ENCODE measurements at regions of chr14 and their contacts with region 1.

Region 1: GRCh38 chr14:91286530-91286937 is 42.0 kb upstream of the GPR68 start:
- DNase-seq: no peak
- H3K4me3 ChIP-seq: no peak overlapping the region
- H3K27me3 ChIP-seq: no peaks in the 10 kb centered on the region
- CTCF ChIP-seq: peak; percentile 85

Region 2: DNA sequence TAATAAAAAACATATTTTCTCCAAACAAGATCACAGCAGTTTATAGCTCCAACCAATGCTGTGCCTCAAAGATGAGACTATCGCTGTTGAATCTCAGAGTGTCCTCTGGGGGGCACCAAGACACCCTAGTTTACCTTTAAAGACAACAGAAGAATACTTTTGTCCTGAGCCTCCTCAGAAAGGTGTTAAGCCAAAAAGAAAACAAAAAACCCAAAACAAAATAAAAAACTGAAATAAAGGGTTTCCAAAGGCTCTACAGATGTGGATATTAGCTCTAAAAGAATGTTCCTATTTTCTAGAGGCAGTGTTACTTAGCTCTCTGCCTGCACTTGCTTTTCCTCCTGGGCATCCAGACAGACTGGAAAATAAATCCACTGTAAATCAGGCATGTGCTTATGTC is 383.4 kb before region 1 on chr14:
- CTCF ChIA-PET with region 1: interaction called, 33 read pairs
- POLR2A ChIA-PET with region 1: no interaction called
- DNase-seq: no peak
- H3K4me3 ChIP-seq: no peak overlapping the region
- H3K27me3 ChIP-seq: no peaks in the 10 kb centered on the region
- CTCF ChIP-seq: peak; percentile 71

Region 3: DNA sequence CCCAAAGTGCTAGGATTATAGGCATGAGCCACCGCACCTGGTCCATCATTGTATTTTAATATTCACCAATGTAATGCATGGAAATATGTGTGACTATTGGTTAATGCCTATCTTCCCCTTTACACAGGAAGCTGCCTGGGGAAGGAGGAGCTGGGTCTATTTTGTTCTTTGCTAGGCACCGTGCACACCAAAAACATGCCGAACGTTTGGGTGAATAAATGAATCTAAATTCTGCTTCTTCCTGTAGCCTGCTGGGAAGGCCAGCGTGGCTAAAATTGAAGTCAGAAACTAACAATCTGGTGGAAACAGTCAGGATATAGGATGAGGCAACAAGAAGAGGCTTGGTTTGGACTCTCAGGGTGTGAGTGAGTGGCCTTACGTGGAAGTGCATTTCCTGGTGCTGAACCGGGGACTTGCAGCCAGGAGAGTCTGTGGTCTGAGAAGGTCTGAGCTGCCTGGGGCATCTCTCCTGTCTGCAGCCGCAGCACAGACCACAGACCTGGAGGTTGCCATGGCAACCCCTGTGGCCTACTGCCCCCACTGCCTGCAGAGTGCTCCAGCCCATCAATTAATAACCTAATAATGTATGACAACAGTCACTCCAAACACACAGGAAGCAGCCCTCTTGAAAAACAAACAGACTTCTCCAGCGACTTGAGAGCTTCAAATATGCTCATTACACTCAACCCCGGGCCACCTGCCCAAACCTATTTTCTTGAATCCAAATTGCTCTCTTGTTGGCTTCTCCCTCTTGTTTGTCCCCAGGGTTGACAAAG is 36.5 kb before region 1 on chr14:
- CTCF ChIA-PET with region 1: no interaction called
- POLR2A ChIA-PET with region 1: no interaction called
- DNase-seq: no peak
- H3K4me3 ChIP-seq: no peak overlapping the region
- H3K27me3 ChIP-seq: no peaks in the 10 kb centered on the region
- CTCF ChIP-seq: no peak